ENCODE measurements at regions of chr5 and their contacts with region 1.

Region 1: GRCh38 chr5:125412561-125413495 is 666.4 kb upstream of the ZNF608 start:
- DNase-seq: peak; percentile 79 to 98 (median 90)

Region 2: DNA sequence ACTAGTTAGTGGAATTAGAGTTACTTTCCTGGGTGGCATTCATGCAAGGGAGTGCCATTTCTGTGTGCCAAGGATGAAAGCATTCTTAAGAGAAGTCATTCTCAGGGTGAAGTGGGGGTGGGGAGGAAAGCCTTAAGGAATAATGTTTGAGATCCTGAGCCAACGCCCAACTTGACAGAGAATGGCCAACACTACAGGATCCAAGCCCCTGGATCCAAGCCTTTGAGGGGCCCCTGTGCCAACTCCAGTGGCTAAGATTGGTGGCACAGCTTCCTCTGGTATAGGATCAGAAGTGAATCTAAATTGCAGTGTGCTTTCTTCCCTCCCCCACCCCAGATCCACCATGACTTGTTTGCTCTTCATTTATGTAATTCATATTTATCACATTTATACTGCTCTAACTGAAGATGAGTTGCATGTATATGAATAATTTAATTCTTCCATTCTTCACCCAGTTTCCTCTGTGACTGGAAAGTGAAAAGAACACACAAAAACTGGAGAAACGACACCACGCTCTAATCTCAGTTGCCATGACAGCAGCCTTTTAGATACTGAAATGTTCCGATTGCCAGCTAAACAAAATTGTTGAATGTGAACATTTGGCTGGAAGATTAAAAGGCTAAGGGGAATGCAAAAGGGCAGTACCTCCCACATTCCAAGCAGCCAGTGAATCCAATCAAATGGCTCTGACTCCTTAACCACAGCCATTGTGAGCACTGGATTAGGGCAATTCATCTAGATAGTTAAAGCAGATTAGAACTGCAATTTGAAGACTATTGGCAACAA is 670.9 kb before region 1 on chr5:
- intact Hi-C with region 1: loop called (anchors 5 kb)
- DNase-seq: peak in 1 of 10 donors; percentile 15

Region 3: GRCh38 chr5:125348221-125348692 is 64.6 kb before region 1 on chr5:
- intact Hi-C with region 1: loop called (anchors 5 kb)
- DNase-seq: peak in 5 of 10 donors; percentile 11 to 68 (median 30)

Region 4: GRCh38 chr5:125484742-125485641 is 72.2 kb after region 1 on chr5:
- intact Hi-C with region 1: loop called (anchors 5 kb)
- DNase-seq: peak; percentile 67 to 97 (median 81)

Region 5: DNA sequence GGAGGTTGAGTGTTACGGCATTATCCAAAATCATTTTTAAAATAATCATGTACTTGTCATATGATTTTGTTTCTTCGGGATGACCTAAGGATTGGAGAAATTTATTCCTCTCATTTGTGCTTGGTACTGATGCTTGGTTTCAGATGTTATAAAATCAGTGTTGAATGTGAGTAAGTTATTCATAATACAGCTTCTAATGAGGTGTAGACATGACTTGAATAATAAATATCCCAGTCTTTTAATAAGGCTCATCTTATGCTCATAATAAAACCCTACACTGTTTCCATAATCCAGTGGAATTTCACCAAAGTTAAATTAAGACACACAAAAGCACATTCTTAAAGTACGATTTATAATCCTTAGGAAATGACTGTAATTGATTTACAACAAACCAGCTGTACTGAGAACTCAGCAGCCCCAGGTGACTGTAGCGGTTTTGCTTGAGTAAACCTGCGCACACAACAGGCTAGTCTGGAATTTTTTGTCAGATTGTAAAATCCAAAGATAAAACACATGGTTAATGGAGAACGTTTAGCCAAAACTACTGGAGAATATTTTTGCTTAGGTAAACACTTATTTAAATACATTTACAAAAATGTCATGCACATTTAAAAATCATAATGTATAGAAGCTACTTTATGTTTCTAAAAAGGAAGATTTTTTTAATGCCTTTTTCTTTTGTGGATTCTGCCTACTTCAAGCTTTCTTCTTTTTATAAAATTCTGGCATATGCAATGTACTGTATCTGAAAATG is 400.6 kb after region 1 on chr5:
- intact Hi-C with region 1: loop called (anchors 10 kb)
- DNase-seq: no peak